Activated naive CD4-positive, alpha-beta T cell treated with anti-CD3 and anti-CD28 coated beads, Interleukin-2, amount 10 ng/mL, durations not matched to agents 7 days and 5 days (primary cell): ENCODE measurements at regions of chr1 and their contacts with region 1.

Region 1: DNA sequence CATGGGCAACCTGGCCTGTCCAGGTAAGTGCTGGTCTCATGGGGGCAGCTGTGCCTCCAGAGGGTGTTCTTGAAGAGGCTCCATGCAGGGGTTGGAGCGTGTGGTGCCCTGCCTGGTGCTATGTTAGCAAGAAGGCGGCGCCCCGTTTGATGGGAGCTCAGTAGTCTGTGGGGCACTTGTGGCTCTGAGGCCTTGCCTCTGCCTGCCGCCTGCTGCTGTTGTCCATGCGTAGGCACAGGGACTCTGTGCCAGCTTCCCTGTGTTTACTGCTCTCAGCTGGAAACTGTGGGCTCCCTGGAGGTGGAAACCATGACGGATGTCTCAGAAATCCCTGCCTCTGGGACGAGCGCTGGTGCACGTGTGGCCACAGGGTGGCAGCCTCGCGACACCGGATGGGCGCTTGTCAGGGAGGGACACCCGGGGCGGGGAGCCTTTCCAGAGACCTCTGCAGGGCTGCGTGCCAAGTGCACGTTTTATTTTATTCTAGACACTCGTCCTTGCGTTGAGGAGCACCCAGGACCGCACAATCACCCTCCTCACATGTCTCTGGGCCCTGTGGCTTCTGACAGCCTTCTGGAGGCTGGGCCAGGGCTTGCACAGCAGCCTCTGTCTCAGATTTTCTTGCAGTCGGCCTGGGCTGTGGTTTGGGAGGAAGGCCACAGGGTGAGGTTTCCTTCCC is 27.1 kb downstream of the SNAP47 start:
- DNase-seq: peak; percentile 95
- H3K4me3 Mint-ChIP-seq: peak overlapping the region; percentile 6
- H3K27ac Mint-ChIP-seq: peak overlapping the region; percentile 93
- H3K4me1 Mint-ChIP-seq: peaks cover 96% of the 10 kb centered on the region
- H3K27me3 Mint-ChIP-seq: no peaks in the 10 kb centered on the region

Region 2: DNA sequence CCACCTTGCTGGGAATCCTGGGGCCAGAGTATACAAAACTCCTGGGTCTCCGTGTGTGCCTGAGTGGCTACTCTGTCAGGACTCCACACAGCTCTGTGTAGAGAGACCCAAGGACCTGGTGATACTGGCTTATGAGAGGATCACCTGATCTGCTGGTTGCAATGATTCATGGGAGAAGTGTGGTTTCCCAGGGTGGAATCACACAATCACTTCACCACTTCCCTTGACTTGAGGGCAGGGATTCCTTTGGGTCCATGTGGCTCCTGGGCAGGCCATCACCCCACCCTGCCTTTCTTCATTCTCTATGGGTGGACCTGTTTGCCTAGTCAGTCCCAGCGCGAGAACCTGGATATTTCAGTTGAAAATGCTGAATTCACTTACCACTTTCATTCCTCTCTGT is 66.4 kb after region 1 on chr1:
- CTCF ChIA-PET with region 1: no interaction called
- DNase-seq: no peak
- H3K4me3 Mint-ChIP-seq: no peak overlapping the region
- H3K27ac Mint-ChIP-seq: no peak overlapping the region
- H3K4me1 Mint-ChIP-seq: peaks cover 2% of the 10 kb centered on the region
- H3K27me3 Mint-ChIP-seq: peaks cover 21% of the 10 kb centered on the region

Region 3: GRCh38 chr1:227946624-227947385 is 184.4 kb after region 1 on chr1:
- CTCF ChIA-PET with region 1: interaction called, 10 read pairs
- DNase-seq: peak; percentile 74
- H3K4me3 Mint-ChIP-seq: peak overlapping the region; percentile 66
- H3K27ac Mint-ChIP-seq: no peak overlapping the region
- H3K4me1 Mint-ChIP-seq: peaks cover 15% of the 10 kb centered on the region
- H3K27me3 Mint-ChIP-seq: peaks cover 79% of the 10 kb centered on the region

Region 4: GRCh38 chr1:227958617-227959347 is 196.4 kb after region 1 on chr1:
- CTCF ChIA-PET with region 1: interaction called, 13 read pairs
- DNase-seq: no peak
- H3K4me3 Mint-ChIP-seq: no peak overlapping the region
- H3K27ac Mint-ChIP-seq: no peak overlapping the region
- H3K4me1 Mint-ChIP-seq: peaks cover 12% of the 10 kb centered on the region
- H3K27me3 Mint-ChIP-seq: peaks cover 54% of the 10 kb centered on the region

Region 5: GRCh38 chr1:227987181-227987580 is 224.8 kb after region 1 on chr1:
- CTCF ChIA-PET with region 1: no interaction called
- DNase-seq: no peak
- H3K4me3 Mint-ChIP-seq: no peak overlapping the region
- H3K27ac Mint-ChIP-seq: no peak overlapping the region
- H3K4me1 Mint-ChIP-seq: no peaks in the 10 kb centered on the region
- H3K27me3 Mint-ChIP-seq: peaks cover 20% of the 10 kb centered on the region